H1 (cell line): ENCODE measurements at regions of chr1 and their contacts with region 1.

Region 1: GRCh38 chr1:204806943-204807687 is 63.5 kb upstream of the NFASC start:
- DNase-seq: peak; percentile 64 to 97
- H3K4me3 ChIP-seq: peak overlapping the region; percentile 19 to 85 (median 70); a peak in 7 of 8 replicates
- H3K27ac ChIP-seq: no peak overlapping the region
- H3K4me1 ChIP-seq: peaks cover 0 to 4% (median 0%) of the 10 kb centered on the region in 4 experiments; a peak in 2 of 7 replicates
- H3K27me3 ChIP-seq: no peaks in the 10 kb centered on the region
- CTCF ChIP-seq: peak; percentile 73 to 99 (median 92)
- EP300 ChIP-seq: peak in 1 of 2 experiments; percentile 49; a peak in 1 of 3 replicates
- POLR2A ChIP-seq: no peak
- RAD21 ChIP-seq: peak; percentile 84 to 88

Region 2: DNA sequence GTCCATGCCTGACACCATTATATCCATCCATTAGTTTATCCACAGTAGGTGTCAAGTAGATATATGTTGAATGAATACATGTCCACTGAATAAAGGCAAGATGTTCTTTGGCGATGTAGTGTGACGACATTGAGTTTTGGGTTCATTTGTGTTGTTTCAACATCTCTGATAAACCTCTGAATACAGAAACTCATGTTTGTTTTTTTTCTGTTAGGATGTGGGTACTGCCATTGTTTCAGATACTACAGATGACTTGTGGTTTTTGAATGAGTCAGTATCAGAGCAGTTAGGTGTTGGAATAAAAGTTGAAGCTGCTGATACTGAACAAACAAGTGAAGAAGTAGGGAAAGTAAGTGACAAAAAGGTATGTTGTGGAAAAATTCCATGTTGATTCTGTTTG is 262.8 kb before region 1 on chr1:
- CTCF ChIA-PET with region 1: interaction called, 17 read pairs
- POLR2A ChIA-PET with region 1: no interaction called
- DNase-seq: no peak
- H3K4me3 ChIP-seq: no peak overlapping the region
- H3K27ac ChIP-seq: no peak overlapping the region
- H3K4me1 ChIP-seq: no peaks in the 10 kb centered on the region
- H3K27me3 ChIP-seq: no peaks in the 10 kb centered on the region
- CTCF ChIP-seq: no peak
- EP300 ChIP-seq: no peak
- POLR2A ChIP-seq: no peak
- RAD21 ChIP-seq: no peak

Region 3: GRCh38 chr1:204640578-204640977 is 166.5 kb before region 1 on chr1:
- CTCF ChIA-PET with region 1: interaction called, 20 read pairs
- POLR2A ChIA-PET with region 1: no interaction called
- DNase-seq: no peak
- H3K4me3 ChIP-seq: no peak overlapping the region
- H3K27ac ChIP-seq: no peak overlapping the region
- H3K4me1 ChIP-seq: no peaks in the 10 kb centered on the region
- H3K27me3 ChIP-seq: no peaks in the 10 kb centered on the region
- CTCF ChIP-seq: 0 out of 4 replicates have a peak, but pooled peaks of 1 of the 3 experiments have one; percentile 16
- EP300 ChIP-seq: no peak
- POLR2A ChIP-seq: no peak
- RAD21 ChIP-seq: no peak; a peak in 1 of 4 replicates

Region 4: DNA sequence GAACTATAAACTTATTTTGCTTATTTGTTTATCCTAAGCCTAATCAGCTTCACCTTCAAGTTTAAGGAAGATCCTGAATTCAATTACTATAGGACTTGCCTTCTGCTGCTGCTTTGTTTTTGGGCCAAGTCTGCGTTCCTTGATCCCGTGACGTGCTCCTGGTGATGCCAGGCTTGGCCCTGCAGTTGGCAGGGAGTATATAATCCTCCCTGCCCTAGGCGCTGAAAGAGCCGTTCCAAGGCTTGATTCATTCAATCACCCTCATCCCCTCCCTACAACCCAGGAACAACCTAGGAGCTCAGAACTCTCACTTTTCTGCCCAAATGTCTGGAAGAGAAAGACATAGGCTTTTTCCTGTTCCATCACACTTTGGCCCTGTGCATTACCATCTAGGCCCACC is 109.2 kb before region 1 on chr1:
- CTCF ChIA-PET with region 1: interaction called, 18 read pairs
- POLR2A ChIA-PET with region 1: no interaction called
- DNase-seq: no peak
- H3K4me3 ChIP-seq: no peak overlapping the region
- H3K27ac ChIP-seq: no peak overlapping the region
- H3K4me1 ChIP-seq: peaks cover 1 to 4% (median 2%) of the 10 kb centered on the region in 4 experiments; a peak in 5 of 7 replicates
- H3K27me3 ChIP-seq: 0 out of 7 replicates have a peak, but pooled peaks cover 0 to 2% (median 0%) of the 10 kb centered on the region in 4 experiments
- CTCF ChIP-seq: no peak
- EP300 ChIP-seq: no peak
- POLR2A ChIP-seq: no peak
- RAD21 ChIP-seq: no peak

Region 5: DNA sequence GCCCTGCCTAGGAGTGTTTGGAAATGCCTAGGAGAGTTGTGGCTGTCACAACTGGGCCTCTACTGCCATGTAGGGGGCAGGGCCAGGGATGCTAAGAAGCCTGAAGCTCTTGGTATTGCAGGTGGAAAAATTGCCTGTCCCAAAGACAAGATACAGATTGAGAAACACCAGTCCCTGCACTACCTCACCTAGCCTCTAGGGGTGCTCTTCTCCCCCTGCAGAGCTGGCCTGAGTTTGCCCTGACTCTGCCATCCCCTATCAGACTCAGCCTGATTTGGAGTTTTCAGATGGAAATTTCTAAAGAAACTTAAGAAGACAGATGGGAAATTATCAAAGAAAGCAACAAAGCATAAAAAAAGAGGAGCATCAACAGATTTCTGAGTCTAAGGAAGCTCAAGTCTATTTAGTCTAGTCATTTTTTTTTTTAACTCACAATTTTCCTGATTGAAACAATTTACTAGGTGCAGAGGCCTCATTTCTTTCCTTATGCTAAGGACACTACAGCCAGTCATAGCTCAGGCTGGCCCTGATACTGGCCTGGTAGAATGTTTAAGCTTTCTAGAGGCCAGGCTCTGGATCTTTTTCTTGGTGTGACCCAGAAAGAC is 60.2 kb before region 1 on chr1:
- CTCF ChIA-PET with region 1: interaction called, 22 read pairs
- POLR2A ChIA-PET with region 1: no interaction called
- DNase-seq: peak; percentile 43 to 75
- H3K4me3 ChIP-seq: no peak overlapping the region
- H3K27ac ChIP-seq: no peak overlapping the region
- H3K4me1 ChIP-seq: peaks cover 0 to 6% (median 4%) of the 10 kb centered on the region in 4 experiments; a peak in 5 of 7 replicates
- H3K27me3 ChIP-seq: no peaks in the 10 kb centered on the region
- CTCF ChIP-seq: peak; percentile 80 to 97 (median 82)
- EP300 ChIP-seq: no peak
- POLR2A ChIP-seq: no peak
- RAD21 ChIP-seq: peak; percentile 55 to 65

Region 6: DNA sequence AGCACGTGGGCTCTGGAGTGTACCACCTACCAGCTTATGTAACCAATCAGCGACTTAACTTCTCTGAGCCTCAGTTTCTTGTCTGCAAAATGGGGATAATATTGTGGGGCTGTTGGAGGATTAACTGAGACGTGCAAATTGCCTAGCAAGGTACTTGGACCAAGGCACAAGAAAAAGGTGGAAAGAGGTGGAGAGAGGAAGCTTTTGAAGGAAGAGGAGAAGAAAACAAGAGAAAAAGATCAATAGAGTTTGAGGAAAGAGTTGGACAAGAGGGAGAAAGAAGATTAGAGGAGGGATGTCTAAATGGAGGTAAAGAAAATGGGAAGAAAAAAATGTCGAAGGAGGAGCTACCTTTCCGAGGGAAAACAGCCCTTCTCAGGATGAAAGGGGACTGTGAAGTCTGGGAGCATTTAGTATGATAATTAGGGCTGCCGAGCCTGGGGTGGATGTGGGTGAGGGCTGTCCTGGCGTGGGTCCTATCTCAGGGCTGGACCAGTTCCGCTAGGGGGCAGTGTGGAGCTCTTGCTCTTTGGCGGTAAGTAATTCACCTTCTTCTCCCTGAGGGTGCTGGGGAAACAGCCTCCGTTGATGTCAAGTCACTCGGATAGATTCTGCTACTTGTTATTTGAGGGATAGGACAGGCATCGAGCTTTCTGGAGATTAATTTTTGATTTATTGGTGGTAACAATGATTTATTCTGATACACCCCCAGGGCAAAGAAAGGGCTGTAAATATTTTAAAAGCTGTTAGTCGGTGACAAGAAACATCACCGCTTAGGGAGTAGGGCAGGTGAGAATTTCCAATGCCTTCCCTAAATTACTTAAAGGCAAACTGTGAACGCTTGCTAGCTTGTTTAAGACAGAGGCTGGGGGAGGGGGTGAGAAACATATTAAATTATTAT is 15.4 kb before region 1 on chr1:
- CTCF ChIA-PET with region 1: interaction called, 231 read pairs
- POLR2A ChIA-PET with region 1: no interaction called
- DNase-seq: peak; percentile 79 to 95
- H3K4me3 ChIP-seq: no peak overlapping the region
- H3K27ac ChIP-seq: no peak overlapping the region
- H3K4me1 ChIP-seq: no peaks in the 10 kb centered on the region
- H3K27me3 ChIP-seq: no peaks in the 10 kb centered on the region; a peak in 2 of 7 replicates
- CTCF ChIP-seq: peak; percentile 79 to 95 (median 91)
- EP300 ChIP-seq: no peak
- POLR2A ChIP-seq: no peak
- RAD21 ChIP-seq: peak; percentile 47 to 62; a peak in 3 of 4 replicates

Region 7: DNA sequence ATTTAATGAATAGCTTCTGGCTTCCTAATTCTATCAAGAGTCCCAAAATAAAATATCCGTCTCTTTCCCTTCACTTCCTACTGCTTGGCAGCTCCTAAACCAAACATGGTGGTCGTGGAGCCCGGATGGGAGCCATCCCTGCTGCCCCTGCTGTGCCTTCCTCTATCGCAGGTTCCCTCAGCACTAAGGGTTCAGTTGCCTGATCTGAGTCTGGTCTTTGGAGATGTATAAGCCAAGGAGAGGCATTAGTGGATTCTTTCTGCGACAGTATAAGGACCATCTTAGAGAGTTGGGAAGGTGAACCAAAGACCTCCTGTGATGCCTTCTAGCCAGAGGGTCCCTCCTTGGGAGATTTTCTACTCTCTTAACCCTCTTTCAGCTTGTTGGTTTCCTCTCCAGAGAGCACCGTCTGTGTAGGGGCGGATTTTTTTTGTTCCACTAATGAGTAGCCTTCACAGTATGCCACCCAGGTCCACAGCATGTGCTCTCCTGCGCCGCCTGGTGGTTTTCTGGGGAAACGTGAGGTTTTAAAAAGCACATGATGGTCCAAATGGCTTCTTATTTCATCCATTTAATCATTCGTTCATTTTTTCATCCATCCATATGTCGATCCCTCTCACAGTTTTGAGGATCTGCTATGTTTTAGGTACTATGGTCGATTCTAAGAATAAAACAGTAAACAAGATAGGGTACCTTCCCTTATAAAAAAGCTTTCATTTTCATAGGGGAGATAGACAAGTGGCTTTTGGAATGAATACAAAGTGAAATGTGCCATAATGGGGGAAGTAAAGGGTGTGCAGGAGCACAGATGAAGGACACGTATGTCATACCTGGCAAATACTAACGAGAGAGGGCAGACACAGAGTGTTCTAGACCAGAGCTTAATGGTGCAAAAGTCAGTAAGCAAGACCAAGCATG is 134.6 kb after region 1 on chr1:
- CTCF ChIA-PET with region 1: interaction called, 122 read pairs
- POLR2A ChIA-PET with region 1: no interaction called
- DNase-seq: peak; percentile 53 to 92
- H3K4me3 ChIP-seq: no peak overlapping the region
- H3K27ac ChIP-seq: no peak overlapping the region
- H3K4me1 ChIP-seq: peaks cover 0 to 3% (median 2%) of the 10 kb centered on the region in 4 experiments; a peak in 2 of 7 replicates
- H3K27me3 ChIP-seq: no peaks in the 10 kb centered on the region; a peak in 1 of 7 replicates
- CTCF ChIP-seq: peak; percentile 78 to 94 (median 93)
- EP300 ChIP-seq: no peak
- POLR2A ChIP-seq: no peak
- RAD21 ChIP-seq: peak; percentile 83 to 88

Region 8: DNA sequence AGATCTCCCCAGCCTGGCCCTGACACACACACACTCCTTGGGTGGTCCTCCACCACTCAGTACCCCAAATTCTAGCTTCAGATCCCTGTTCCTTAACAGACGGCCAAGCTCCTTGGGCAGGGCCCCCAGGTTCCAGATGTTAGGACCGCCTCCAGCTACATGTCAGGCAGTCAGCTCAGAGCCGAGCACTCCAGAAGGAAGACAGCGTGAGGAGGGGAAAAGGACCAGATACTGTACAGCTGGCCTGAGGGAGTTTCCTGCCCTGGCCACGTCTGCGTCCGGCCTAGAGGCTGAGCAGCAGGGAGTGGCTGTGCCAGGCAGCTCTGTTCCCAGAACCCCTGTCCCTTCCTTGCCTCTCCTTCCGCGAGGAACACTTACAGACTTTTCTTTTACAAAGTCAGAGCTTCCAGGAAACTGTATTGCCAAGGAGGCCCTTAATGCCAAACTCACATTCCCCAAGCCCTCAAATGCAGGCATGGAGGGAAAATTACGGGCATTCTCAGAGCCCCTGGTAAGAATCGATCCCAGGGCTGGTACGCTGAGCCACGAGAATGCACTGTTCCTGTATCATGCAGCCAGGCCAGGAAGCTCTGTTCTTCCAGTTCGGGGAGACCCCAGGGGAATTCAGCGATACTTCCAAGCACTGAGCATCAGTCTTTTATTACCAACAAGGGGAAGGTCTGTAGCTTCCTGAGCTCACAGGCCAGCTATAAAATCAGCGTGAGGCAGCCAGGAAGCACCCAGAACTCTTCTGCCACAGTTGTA is 190.7 kb after region 1 on chr1:
- CTCF ChIA-PET with region 1: no interaction called
- POLR2A ChIA-PET with region 1: no interaction called
- DNase-seq: no peak
- H3K4me3 ChIP-seq: no peak overlapping the region
- H3K27ac ChIP-seq: no peak overlapping the region
- H3K4me1 ChIP-seq: peaks cover 0 to 5% (median 1%) of the 10 kb centered on the region in 4 experiments; a peak in 3 of 7 replicates
- H3K27me3 ChIP-seq: no peaks in the 10 kb centered on the region; a peak in 1 of 7 replicates
- CTCF ChIP-seq: no peak
- EP300 ChIP-seq: no peak
- POLR2A ChIP-seq: no peak
- RAD21 ChIP-seq: no peak